Body of pancreas (tissue), 4 donors: ENCODE measurements at regions of chr6 and their contacts with region 1.

Region 1: DNA sequence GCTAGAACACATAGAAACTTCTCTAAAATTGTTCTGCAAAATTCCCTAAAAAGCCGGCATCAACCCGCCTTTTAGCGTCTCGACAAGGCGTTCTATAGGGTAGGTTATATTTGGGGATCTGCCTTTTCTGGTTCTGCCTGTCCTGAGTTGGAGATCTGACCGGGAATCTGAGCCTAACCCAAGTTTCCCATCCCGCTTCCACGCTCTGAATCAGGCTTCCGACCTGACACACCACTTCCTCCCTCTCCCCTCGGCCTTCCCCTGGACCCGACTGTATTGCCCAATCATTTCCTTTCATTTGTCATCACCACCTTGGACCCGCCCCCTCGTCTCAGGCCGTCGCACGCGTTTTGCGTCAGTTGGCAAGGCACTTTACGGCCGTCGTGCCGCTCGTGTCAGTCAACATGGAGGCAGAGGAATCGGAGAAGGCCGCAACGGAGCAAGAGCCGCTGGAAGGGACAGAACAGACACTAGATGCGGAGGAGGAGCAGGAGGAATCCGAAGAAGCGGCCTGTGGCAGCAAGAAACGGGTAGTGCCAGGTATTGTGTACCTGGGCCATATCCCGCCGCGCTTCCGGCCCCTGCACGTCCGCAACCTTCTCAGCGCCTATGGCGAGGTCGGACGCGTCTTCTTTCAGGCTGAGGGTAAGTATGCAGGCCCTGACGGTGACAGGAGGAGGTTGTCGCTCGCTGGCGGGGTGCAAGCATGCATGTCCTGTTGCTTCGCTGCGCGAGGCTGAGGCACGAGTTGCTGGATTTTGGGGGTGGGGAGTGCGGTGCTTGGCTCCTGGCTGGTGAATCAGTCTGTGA is at the start of gene ABT1:
- DNase-seq: peak; percentile 98 to 99 (median 98)
- ATAC-seq: peak; percentile 98
- H3K4me3 ChIP-seq: peak within 1 kb of the TSS; percentile 96 to 97
- H3K27ac ChIP-seq: peak within 1 kb of the TSS; percentile 64 to 89 (median 74)
- H3K4me1 ChIP-seq: peaks cover 21% of the 10 kb centered on the region
- H3K27me3 ChIP-seq: no peaks in the 10 kb centered on the region
- CTCF ChIP-seq: no peak
- POLR2A ChIP-seq: peak; percentile 57 to 90 (median 86)
- total RNA-seq, gene ABT1: 3.0 to 8.8 TPM

Region 2: DNA sequence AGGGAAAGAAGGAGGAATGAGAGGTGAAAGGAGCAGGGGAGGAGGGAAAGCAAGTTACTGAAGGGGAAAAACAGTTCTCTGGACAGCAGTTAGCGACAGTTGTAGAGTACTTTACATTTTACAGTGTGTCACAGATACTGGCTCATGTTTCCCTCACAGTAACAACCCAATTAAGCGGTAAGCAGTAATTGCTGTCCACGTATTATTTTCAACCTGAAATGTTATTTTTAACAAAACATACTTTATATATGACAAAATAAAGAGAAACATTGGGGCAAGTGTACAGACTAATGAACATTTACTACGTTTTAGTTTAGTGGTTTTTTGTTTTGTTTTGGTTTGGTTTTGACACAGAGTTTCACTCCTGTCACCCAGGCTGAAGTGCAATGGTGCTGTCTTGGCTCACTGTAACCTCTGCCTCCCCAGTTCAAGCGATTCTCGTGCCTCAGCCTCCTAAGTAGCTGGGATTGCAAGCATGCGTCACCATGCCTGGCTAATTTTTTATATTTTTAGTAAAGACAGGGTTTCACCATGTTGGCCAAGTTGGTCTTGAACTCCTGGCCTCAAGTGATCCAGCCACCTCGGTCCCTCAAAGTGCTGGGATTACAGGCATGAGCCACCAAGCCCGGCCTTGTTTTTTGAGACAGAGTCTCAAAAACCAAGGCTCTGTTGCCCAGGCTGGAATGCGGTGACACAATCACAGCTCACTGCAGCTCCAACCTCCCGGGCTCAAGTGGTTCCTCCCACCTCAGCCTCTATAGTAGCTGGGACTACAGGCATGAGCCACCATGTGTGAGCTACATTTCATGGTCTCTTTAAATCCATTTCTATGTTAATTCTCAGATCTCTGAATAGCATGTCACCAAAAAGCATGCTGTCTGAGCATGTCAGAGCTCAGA is 254.4 kb before region 1 on chr6:
- intact Hi-C with region 1: loop called (anchors 10 kb)
- DNase-seq: no peak
- ATAC-seq: no peak
- H3K4me3 ChIP-seq: no peak overlapping the region
- H3K27ac ChIP-seq: no peak overlapping the region
- H3K4me1 ChIP-seq: no peaks in the 10 kb centered on the region
- H3K27me3 ChIP-seq: no peaks in the 10 kb centered on the region
- CTCF ChIP-seq: no peak
- POLR2A ChIP-seq: no peak